ENCODE measurements at regions of chr9 and their contacts with region 1.

Region 1: GRCh38 chr9:133992780-133993634 is 883 bp upstream of the VAV2 start:
- DNase-seq: peak; percentile 84
- ATAC-seq: peak; percentile 64
- H3K4me3 Mint-ChIP-seq: peak overlapping the region; percentile 66
- H3K27ac Mint-ChIP-seq: no peak overlapping the region
- H3K4me1 Mint-ChIP-seq: peaks cover 1% of the 10 kb centered on the region
- H3K27me3 Mint-ChIP-seq: peaks cover 9% of the 10 kb centered on the region

Region 2: GRCh38 chr9:133782157-133783130 is 210.6 kb before region 1 on chr9:
- POLR2A ChIA-PET with region 1: interaction called, 12 read pairs
- DNase-seq: peak; percentile 71
- ATAC-seq: peak; percentile 46
- H3K4me3 Mint-ChIP-seq: no peak overlapping the region
- H3K27ac Mint-ChIP-seq: no peak overlapping the region
- H3K4me1 Mint-ChIP-seq: peaks cover 11% of the 10 kb centered on the region
- H3K27me3 Mint-ChIP-seq: no peaks in the 10 kb centered on the region

Measured in activated naive CD8-positive, alpha-beta T cell treated with anti-CD3 and anti-CD28 coated beads, Interleukin-2, amount 10 ng/mL, durations not matched to agents 7 days and 5 days (primary cell).